H1 (cell line): ENCODE measurements at regions of chr10 and their contacts with region 1.

Region 1: DNA sequence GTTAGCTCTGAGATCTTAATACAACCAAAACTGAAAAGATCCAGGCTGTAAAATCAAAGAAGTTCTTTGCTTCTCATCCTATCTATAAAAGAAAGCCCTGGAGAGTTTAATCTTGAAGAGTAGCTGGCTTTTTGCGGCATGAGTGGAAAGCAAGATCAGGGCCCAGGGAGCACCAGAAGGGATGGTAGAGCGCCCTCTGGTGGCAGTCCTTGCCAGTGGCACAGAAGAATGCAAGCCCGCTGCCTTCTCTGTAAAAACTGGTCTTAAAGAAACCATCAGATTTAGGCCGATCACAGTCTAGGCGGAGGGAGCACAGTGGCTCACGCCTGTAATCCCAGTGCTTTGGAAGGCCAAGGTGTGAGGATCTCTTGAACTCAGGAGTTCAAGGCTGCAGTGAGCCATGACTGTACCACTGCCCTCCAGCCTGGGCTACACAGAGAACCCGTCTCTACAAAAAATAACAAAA is 35.6 kb downstream of the CPN1 start:
- DNase-seq: peak; percentile 79 to 96
- H3K4me3 ChIP-seq: no peak overlapping the region
- H3K27ac ChIP-seq: no peak overlapping the region
- H3K4me1 ChIP-seq: peaks cover 0 to 3% (median under 1%) of the 10 kb centered on the region in 4 experiments; a peak in 1 of 7 replicates
- H3K27me3 ChIP-seq: no peaks in the 10 kb centered on the region
- CTCF ChIP-seq: peak; percentile 88 to 94 (median 89)
- EP300 ChIP-seq: no peak
- POLR2A ChIP-seq: no peak
- RAD21 ChIP-seq: peak; percentile 84 to 90

Region 2: GRCh38 chr10:99845837-99846382 is 200.1 kb before region 1 on chr10:
- CTCF ChIA-PET with region 1: interaction called, 34 read pairs
- POLR2A ChIA-PET with region 1: no interaction called
- DNase-seq: peak in 1 of 2 experiments; percentile 74
- H3K4me3 ChIP-seq: no peak overlapping the region
- H3K27ac ChIP-seq: no peak overlapping the region
- H3K4me1 ChIP-seq: peaks cover 8 to 31% (median 21%) of the 10 kb centered on the region in 4 experiments; a peak in 6 of 7 replicates
- H3K27me3 ChIP-seq: no peaks in the 10 kb centered on the region; a peak in 1 of 7 replicates
- CTCF ChIP-seq: peak; percentile 7 to 98 (median 83)
- EP300 ChIP-seq: no peak
- POLR2A ChIP-seq: no peak
- RAD21 ChIP-seq: peak; percentile 95 to 97

Region 3: DNA sequence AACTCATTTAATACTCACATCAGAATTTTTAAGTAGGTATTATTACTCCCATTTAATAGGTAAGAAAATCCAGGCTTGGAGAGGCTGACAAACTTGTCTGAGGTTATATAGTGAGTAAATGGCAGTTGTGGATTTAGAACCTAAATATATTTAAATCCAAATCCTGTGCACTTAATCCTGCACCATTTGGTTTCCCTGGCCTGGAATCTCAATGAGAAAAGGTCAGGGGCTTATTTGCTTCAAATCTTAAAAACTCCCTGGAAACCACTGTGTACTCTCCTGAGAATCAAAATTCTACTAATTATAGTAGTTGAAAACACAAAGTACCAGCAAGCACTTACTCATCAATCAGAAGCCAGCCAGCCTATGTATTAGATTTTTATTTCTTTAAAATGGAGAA is 134.0 kb before region 1 on chr10:
- CTCF ChIA-PET with region 1: interaction called, 43 read pairs
- POLR2A ChIA-PET with region 1: interaction called, 19 read pairs
- DNase-seq: no peak
- H3K4me3 ChIP-seq: peak overlapping the region; percentile 72 to 90 (median 87)
- H3K27ac ChIP-seq: peak overlapping the region; percentile 8; the same call in 1 of the 2 replicates
- H3K4me1 ChIP-seq: peaks cover 2 to 6% (median 3%) of the 10 kb centered on the region in 4 experiments; a peak in 4 of 7 replicates
- H3K27me3 ChIP-seq: no peaks in the 10 kb centered on the region
- CTCF ChIP-seq: no peak
- EP300 ChIP-seq: no peak
- POLR2A ChIP-seq: no peak
- RAD21 ChIP-seq: no peak

Region 4: GRCh38 chr10:100009793-100010676 is 36.0 kb before region 1 on chr10 and contains the start of gene DNMBP:
- CTCF ChIA-PET with region 1: interaction called, 20 read pairs
- POLR2A ChIA-PET with region 1: no interaction called
- DNase-seq: peak in 1 of 2 experiments; percentile 92
- H3K4me3 ChIP-seq: peak within 1 kb of the TSS; percentile 50 to 80 (median 76)
- H3K27ac ChIP-seq: no peak within 1 kb of the TSS
- H3K4me1 ChIP-seq: peaks cover 4 to 11% (median 6%) of the 10 kb centered on the region in 4 experiments; a peak in 5 of 7 replicates
- H3K27me3 ChIP-seq: no peaks in the 10 kb centered on the region; a peak in 2 of 7 replicates
- CTCF ChIP-seq: peak; percentile 65 to 85 (median 75)
- EP300 ChIP-seq: no peak
- POLR2A ChIP-seq: no peak
- RAD21 ChIP-seq: peak; percentile 20 to 63; a peak in 3 of 4 replicates
- total RNA-seq, gene DNMBP: 26.4 and 26.7 TPM in 2 replicates

Region 5: DNA sequence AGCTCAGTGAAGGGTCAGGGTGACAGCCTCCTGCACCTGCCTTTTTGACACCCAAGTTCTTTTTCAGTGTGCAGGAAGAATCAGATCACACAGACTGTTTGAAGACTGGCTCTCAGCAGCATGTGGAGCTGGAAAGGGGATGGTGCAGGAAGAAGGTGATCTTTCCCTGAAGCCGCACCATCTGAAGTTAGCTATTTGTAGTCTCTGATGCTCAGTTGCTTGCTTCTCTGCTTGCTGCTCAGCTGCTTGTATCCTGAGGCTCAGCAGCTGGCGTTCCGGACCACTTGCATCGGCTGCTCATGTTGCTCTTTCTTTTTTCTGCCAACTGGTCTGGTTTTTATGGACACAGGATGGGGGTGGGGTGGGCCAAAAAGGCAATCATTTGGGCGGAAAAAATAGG is 20.5 kb before region 1 on chr10:
- CTCF ChIA-PET with region 1: interaction called, 37 read pairs
- POLR2A ChIA-PET with region 1: no interaction called
- DNase-seq: no peak
- H3K4me3 ChIP-seq: no peak overlapping the region
- H3K27ac ChIP-seq: no peak overlapping the region
- H3K4me1 ChIP-seq: peaks cover 0 to under 1% (median 0%) of the 10 kb centered on the region in 4 experiments; a peak in 2 of 7 replicates
- H3K27me3 ChIP-seq: no peaks in the 10 kb centered on the region
- CTCF ChIP-seq: no peak
- EP300 ChIP-seq: no peak
- POLR2A ChIP-seq: no peak
- RAD21 ChIP-seq: no peak

Region 6: DNA sequence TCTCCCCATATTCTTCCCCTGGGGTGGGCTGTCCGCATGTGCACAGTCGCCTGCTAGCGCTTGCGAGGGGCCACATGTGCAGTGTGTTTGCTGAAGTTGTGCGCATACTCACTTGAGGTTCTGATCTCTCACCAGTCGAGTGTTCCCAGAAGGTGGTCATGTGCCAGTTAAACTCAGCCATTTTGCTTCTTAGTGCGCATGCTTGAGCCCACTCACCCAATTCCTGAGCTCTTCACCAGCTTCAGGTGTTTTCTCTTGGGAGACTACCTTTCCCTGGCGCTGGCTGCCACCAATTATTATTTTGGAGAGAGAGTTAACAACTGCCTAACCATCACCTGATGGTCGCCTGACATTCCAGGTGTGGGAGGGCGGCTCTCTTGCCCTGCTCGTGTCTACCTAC is 60.8 kb after region 1 on chr10:
- CTCF ChIA-PET with region 1: no interaction called
- POLR2A ChIA-PET with region 1: no interaction called
- DNase-seq: no peak
- H3K4me3 ChIP-seq: no peak overlapping the region
- H3K27ac ChIP-seq: no peak overlapping the region
- H3K4me1 ChIP-seq: peaks cover 0 to under 1% (median 0%) of the 10 kb centered on the region in 4 experiments; a peak in 1 of 7 replicates
- H3K27me3 ChIP-seq: no peaks in the 10 kb centered on the region
- CTCF ChIP-seq: no peak
- EP300 ChIP-seq: no peak
- POLR2A ChIP-seq: no peak
- RAD21 ChIP-seq: no peak

Region 7: GRCh38 chr10:101189541-101190401 is 1143.7 kb after region 1 on chr10:
- CTCF ChIA-PET with region 1: no interaction called
- POLR2A ChIA-PET with region 1: no interaction called
- DNase-seq: peak; percentile 21 to 64
- H3K4me3 ChIP-seq: peak overlapping the region in 1 of 4 experiments; percentile 5; a peak in 1 of 8 replicates
- H3K27ac ChIP-seq: no peak overlapping the region
- H3K4me1 ChIP-seq: peaks cover 0 to 18% (median 9%) of the 10 kb centered on the region in 4 experiments; a peak in 6 of 7 replicates
- H3K27me3 ChIP-seq: no peaks in the 10 kb centered on the region; a peak in 2 of 7 replicates
- CTCF ChIP-seq: no peak
- EP300 ChIP-seq: no peak
- POLR2A ChIP-seq: no peak
- RAD21 ChIP-seq: no peak